ENCODE measurements at regions of chr7 and their contacts with region 1.

Region 1: DNA sequence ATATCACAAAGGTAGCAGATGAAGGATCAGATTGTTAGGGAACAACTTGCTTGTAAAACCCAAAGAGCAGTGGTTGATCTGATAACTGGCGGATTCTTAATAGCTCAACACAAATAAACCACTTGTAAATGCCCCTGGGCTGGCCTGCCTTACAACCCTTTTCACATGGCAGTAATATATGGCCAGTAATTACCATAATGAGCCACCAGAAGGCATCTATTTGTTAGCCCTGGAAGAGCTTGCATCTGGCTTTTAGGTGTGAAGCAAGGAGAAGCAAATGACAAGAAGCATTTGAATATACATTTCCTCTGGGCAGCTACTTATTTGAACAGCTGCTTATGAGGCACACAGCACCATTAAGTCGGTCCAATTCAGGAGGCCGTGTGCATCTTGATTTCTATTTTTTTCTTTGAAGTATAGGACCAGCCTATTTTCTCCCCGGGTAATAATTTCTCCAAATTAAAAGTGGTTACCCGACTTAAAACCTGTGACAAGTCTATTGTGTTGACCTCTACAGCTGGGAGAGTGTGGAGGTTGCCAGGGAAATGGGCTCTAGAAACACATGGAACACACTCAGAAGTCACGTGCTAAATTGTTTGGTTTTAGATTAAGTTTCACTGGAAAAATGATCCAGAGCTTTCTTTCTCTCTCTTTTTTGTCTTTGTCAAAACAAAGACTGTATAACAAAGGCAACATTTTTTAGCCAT is 113.4 kb downstream of the SEM1 start:
- DNase-seq: peak; percentile 80 to 97
- H3K4me3 ChIP-seq: no peak overlapping the region
- H3K4me1 ChIP-seq: peaks cover 23% of the 10 kb centered on the region
- H3K27me3 ChIP-seq: no peaks in the 10 kb centered on the region

Region 2: GRCh38 chr7:97016381-97017191 is 420.3 kb after region 1 on chr7:
- in situ Hi-C with region 1: loop called (anchors 5 kb)
- DNase-seq: peak; percentile 79 to 88
- H3K4me3 ChIP-seq: peak overlapping the region; percentile 41
- H3K4me1 ChIP-seq: peaks cover 86% of the 10 kb centered on the region
- H3K27me3 ChIP-seq: no peaks in the 10 kb centered on the region

Measured in HAP-1 (cell line).